HCT116 (cell line): ENCODE measurements at regions of chr12 and their contacts with region 1.

Region 1: DNA sequence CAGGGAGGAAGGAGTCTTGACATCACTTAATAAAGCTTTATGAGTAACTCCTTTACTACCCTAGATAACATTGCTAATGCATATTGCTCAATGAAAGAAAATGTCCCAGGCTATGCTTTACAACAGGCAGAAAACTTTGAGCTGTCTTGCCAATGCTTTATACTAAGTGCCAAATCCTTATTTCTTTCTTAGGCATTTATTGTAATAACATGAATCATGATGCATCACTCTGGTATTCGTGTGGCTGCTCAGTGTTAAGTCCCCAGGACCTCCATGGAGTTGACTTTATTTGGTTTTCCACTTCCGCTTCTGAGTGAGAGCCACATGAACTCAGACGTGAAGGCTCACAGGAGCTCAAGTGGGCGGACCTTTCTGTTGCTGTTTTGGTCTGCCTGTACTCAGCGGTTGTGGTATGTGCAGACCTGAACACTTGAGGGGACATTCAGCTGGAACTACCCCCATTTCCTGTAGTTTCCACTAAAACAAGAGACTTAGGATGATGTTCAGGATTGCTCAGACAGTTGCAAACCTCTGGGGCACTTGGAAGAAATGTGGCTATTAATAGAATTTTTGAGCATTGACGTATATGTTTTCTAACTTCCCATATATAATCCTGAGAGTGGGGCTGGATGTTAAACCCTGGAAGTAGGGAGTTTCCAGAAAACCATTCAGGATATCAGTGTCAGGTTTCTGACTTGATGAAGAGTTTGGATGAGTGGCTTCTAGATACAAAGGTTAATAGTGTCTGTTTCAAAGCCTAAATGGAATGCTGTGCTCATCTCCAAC is 258.6 kb downstream of the MSRB3 start:
- DNase-seq: peak; percentile 100
- ATAC-seq: peak; percentile 74
- H3K4me3 ChIP-seq: no peak overlapping the region
- H3K27ac ChIP-seq: peak overlapping the region; percentile 99
- H3K4me1 ChIP-seq: peaks cover 60 to 68% of the 10 kb centered on the region in 2 experiments
- H3K27me3 ChIP-seq: no peaks in the 10 kb centered on the region
- CTCF ChIP-seq: no peak
- POLR2A ChIP-seq: no peak
- RAD21 ChIP-seq: no peak

Region 2: DNA sequence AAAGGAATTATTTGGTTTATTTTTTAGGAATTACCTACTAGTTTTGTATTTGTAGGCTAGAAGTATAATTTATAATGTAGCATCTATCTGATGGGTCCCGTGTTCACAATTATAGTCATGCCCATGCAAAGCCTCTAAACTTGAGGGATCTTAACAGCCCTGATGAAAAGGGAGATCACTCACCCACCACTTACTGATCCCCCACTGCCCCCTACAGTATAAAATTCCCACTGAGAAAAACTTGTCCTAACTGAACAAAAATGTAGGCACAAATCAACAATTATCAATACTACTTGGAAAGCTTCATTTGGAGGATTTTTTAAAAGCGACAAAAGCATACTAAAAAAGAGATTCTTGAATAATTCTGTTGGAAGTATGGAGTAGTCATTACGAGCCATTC is 436.9 kb before region 1 on chr12:
- CTCF ChIA-PET with region 1: no interaction called
- POLR2A ChIA-PET with region 1: no interaction called
- RAD21 ChIA-PET with region 1: no interaction called
- intact Hi-C with region 1: no loop called
- DNase-seq: no peak
- ATAC-seq: 0 out of 2 replicates have a peak, but pooled peaks have one; percentile 49
- H3K4me3 ChIP-seq: no peak overlapping the region
- H3K27ac ChIP-seq: no peak overlapping the region
- H3K4me1 ChIP-seq: no peaks in the 10 kb centered on the region
- H3K27me3 ChIP-seq: peaks cover 20% of the 10 kb centered on the region; the same call in 1 of the 2 replicates
- CTCF ChIP-seq: peak; percentile 31 to 48 (median 42); a peak in 5 of 6 replicates
- POLR2A ChIP-seq: no peak
- RAD21 ChIP-seq: peak; percentile 59

Region 3: GRCh38 chr12:65430571-65431306 is 106.3 kb before region 1 on chr12:
- CTCF ChIA-PET with region 1: no interaction called
- POLR2A ChIA-PET with region 1: interaction called, 10 read pairs
- RAD21 ChIA-PET with region 1: interaction called, 4 to 5 read pairs
- intact Hi-C with region 1: loop called (anchors 2 kb)
- DNase-seq: peak; percentile 88
- ATAC-seq: peak; percentile 79
- H3K4me3 ChIP-seq: no peak overlapping the region
- H3K27ac ChIP-seq: peak overlapping the region; percentile 96
- H3K4me1 ChIP-seq: peaks cover 78 to 97% of the 10 kb centered on the region in 2 experiments
- H3K27me3 ChIP-seq: no peaks in the 10 kb centered on the region
- CTCF ChIP-seq: no peak
- POLR2A ChIP-seq: no peak
- RAD21 ChIP-seq: peak; percentile 46

Region 4: DNA sequence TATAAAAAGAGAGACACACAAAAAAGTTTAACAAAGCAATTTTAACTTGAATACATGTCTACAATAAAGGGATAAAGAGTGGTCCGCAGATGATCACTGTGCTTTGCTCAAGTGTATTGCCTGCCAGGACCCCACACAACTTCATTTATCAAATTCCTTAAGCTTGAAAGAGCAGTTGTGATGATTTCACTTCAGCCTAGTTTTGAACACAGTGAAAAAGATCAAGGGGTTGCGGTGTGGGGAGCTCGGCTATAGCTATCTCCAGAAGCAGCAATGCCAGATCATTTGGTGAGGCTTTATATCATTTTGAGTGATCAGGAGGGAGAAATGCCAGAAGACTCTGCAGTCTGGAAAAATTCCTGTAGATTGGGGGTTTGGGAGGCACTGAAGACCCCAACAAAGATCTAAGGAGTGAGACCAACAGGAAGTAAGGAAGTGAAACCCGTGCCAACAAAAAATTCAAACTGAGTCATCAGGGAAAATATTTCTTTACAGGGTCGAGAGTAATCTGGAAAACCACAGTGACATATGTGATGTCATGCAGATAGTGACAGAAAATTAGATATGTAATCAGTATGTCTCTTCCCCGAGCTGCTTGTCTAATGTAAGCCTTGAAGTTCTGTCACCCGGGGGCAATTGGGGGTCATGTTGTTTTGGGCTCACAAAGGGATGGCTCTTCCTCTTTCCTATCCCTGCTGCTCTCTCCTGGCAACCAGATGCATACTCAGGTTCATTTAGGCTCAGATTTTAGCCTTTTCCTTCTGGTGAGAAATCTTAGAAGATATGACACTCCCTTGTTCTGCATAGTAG is 36.8 kb before region 1 on chr12:
- CTCF ChIA-PET with region 1: no interaction called
- POLR2A ChIA-PET with region 1: interaction called, 15 read pairs
- RAD21 ChIA-PET with region 1: no interaction called
- intact Hi-C with region 1: no loop called
- DNase-seq: peak; percentile 93
- ATAC-seq: peak; percentile 76
- H3K4me3 ChIP-seq: peak overlapping the region in 1 of 2 experiments; percentile 27; a peak in 1 of 4 replicates
- H3K27ac ChIP-seq: peak overlapping the region; percentile 87
- H3K4me1 ChIP-seq: peaks cover 74 to 96% of the 10 kb centered on the region in 2 experiments
- H3K27me3 ChIP-seq: no peaks in the 10 kb centered on the region
- CTCF ChIP-seq: no peak
- POLR2A ChIP-seq: no peak
- RAD21 ChIP-seq: peak; percentile 42; the same call in 1 of the 2 replicates

Region 5: GRCh38 chr12:65518771-65519170 is 18.3 kb before region 1 on chr12:
- CTCF ChIA-PET with region 1: no interaction called
- POLR2A ChIA-PET with region 1: interaction called, 11 read pairs
- RAD21 ChIA-PET with region 1: interaction called in 1 of 2 experiments, 3 read pairs
- intact Hi-C with region 1: no loop called
- DNase-seq: no peak
- ATAC-seq: peak; percentile 89
- H3K4me3 ChIP-seq: no peak overlapping the region
- H3K27ac ChIP-seq: peak overlapping the region; percentile 86
- H3K4me1 ChIP-seq: peaks cover 65 to 88% of the 10 kb centered on the region in 2 experiments
- H3K27me3 ChIP-seq: no peaks in the 10 kb centered on the region
- CTCF ChIP-seq: peak in 2 of 3 experiments; percentile 6 to 24; a peak in 1 of 6 replicates
- POLR2A ChIP-seq: no peak
- RAD21 ChIP-seq: peak; percentile 28; the same call in 1 of the 2 replicates

Region 6: GRCh38 chr12:65695113-65695865 is 158.2 kb after region 1 on chr12:
- CTCF ChIA-PET with region 1: no interaction called
- POLR2A ChIA-PET with region 1: interaction called, 5 read pairs
- RAD21 ChIA-PET with region 1: no interaction called
- intact Hi-C with region 1: loop called (anchors 10 kb)
- DNase-seq: peak; percentile 93
- ATAC-seq: peak; percentile 88
- H3K4me3 ChIP-seq: 0 out of 4 replicates have a peak overlapping the region, but pooled peaks of 1 of the 2 experiments have one; percentile 9
- H3K27ac ChIP-seq: peak overlapping the region; percentile 84
- H3K4me1 ChIP-seq: peaks cover 62 to 66% of the 10 kb centered on the region in 2 experiments
- H3K27me3 ChIP-seq: no peaks in the 10 kb centered on the region
- CTCF ChIP-seq: no peak
- POLR2A ChIP-seq: no peak
- RAD21 ChIP-seq: peak; percentile 30

Region 7: GRCh38 chr12:65823513-65824375 is 286.7 kb after region 1 on chr12:
- CTCF ChIA-PET with region 1: no interaction called
- POLR2A ChIA-PET with region 1: interaction called, 6 read pairs
- RAD21 ChIA-PET with region 1: no interaction called
- intact Hi-C with region 1: loop called (anchors 5 kb)
- DNase-seq: peak; percentile 74
- ATAC-seq: peak; percentile 65
- H3K4me3 ChIP-seq: peak overlapping the region; percentile 83 to 85
- H3K27ac ChIP-seq: peak overlapping the region; percentile 100
- H3K4me1 ChIP-seq: peaks cover 54 to 81% of the 10 kb centered on the region in 2 experiments
- H3K27me3 ChIP-seq: no peaks in the 10 kb centered on the region
- CTCF ChIP-seq: no peak
- POLR2A ChIP-seq: peak; percentile 63
- RAD21 ChIP-seq: no peak